Calu3 (cell line): ENCODE measurements at regions of chr12 and their contacts with region 1.

Region 1: DNA sequence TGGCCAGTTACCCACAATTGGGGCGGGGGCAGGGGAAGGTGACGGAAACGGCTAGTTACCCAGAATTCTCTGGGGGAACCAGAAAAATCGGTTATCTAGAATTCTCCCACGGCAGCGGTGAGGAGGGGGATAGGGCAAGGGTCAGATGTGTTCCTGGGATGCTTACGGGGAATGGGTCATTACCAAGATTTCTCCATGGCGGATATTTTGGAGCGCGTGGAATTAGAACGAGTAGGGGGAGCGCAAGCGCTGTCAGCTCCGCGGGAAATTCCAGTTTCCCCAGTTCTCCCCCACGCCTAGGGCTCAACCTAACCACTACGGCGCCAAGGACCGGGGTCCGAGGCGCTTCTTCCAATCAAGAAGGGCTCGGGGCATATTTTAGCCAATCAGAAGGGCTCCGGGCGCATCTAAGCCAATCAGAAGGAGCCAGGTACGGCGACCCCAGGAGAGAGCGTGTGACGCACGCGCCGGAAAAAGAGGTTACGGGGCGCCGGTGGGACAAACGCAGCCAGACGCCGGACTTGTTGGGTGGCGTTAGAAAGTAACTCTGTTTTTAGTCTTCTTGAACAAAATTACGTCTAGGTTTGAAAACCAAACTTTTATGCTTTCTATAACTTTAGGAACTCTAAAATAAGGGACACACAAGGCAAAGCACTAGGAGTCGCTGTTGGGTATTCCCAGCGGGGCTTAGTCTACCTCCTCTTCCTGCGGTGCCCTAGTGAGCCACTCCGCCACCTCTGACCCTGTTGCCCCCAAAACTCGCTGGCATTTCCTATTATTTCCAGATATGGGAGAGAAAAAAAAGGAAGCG is at the start of gene PAN2:
- DNase-seq: peak; percentile 96
- H3K4me3 Mint-ChIP-seq: peak within 1 kb of the TSS; percentile 79
- H3K27ac Mint-ChIP-seq: peak within 1 kb of the TSS; percentile 99
- H3K4me1 Mint-ChIP-seq: peaks cover 27% of the 10 kb centered on the region
- H3K27me3 Mint-ChIP-seq: no peaks in the 10 kb centered on the region
- CTCF ChIP-seq: peak; percentile 58
- total RNA-seq, gene PAN2: 53.5 and 72.5 TPM in 2 replicates

Region 2: DNA sequence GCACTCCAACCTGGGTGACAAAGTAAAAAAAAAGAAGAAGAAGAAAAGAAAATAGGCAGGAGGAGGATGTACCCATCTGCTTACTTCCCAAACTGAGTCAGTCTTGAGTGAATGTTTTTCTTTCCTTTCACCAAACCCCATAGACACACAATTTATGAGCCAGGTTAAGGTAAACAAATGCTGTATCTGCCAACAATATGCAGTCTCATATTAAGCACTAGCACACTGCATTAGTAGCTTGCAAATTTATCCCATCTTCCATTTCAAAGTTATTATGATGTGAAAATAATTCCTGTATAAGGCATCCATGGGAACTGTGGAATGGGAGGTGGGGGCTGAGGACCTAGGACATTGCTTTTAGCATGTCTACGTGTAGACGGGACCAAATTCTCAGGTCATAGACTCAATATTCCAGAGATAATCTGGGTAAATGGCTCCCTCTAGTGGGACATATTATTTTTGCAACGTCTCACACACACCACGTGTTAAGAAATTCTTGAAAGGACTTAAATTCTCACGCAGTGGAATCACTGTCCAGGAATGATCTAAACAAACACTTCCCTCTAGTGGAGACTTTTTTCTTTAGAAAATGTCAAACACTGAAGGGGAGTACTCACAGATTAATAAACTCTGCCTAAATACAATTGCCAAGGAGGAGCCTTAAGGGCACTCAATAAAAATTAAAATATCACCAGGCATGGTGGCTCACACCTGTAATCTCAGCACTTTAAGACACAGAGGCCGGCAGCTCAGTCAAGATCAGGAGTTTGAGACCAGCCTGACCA is 714.3 kb before region 1 on chr12:
- CTCF ChIA-PET with region 1: no interaction called
- intact Hi-C with region 1: no loop called
- DNase-seq: peak; percentile 82
- H3K4me3 Mint-ChIP-seq: no peak overlapping the region
- H3K27ac Mint-ChIP-seq: no peak overlapping the region
- H3K4me1 Mint-ChIP-seq: no peaks in the 10 kb centered on the region
- H3K27me3 Mint-ChIP-seq: peaks cover 18% of the 10 kb centered on the region
- CTCF ChIP-seq: peak; percentile 86

Region 3: GRCh38 chr12:55760663-55761062 is 573.2 kb before region 1 on chr12:
- CTCF ChIA-PET with region 1: no interaction called
- intact Hi-C with region 1: no loop called
- DNase-seq: no peak
- H3K4me3 Mint-ChIP-seq: no peak overlapping the region
- H3K27ac Mint-ChIP-seq: no peak overlapping the region
- H3K4me1 Mint-ChIP-seq: no peaks in the 10 kb centered on the region
- H3K27me3 Mint-ChIP-seq: no peaks in the 10 kb centered on the region
- CTCF ChIP-seq: no peak

Region 4: DNA sequence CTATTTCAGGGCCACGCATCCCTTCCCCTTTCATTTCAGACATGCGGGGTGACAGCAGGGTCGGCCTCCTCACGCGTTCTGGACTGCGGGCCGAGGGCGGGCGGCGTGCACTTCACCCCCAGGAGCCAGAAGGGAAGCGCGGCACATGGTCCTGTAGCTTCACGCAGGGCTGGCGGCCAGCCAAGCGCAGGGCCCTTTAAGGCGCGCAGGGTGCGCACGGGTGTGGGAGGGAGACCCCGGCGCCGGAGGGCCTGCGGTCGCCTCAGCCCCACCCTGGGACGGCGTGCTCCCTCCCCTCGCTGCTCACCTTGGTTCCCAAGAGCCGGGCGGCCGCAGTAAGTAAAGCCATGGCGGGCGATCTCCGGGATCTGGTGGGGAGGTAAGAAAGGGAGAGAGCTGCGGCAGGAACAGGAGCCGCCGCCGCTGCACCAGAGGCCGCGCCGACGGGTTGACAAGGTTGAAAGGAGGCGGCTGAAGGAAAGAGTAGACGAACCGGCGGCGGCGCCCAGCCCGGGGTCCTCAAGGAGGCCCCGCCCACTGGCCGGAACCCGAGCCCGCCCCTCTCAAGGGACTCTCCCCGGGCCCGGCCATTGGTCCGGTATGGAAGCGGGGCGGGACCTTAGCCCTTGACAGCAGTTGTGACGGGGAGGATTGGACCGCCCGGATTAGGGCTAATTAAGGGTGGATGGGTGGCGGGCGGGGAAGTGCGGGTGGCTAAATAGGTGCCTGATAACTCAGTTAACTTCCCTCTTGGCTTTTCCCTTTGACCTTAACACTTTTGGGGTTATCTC is 33.8 kb before region 1 on chr12 and contains the start of gene CS:
- CTCF ChIA-PET with region 1: interaction called, 3 read pairs
- intact Hi-C with region 1: loop called (anchors 1 kb)
- DNase-seq: peak; percentile 99
- H3K4me3 Mint-ChIP-seq: peak within 1 kb of the TSS; percentile 96
- H3K27ac Mint-ChIP-seq: peak within 1 kb of the TSS; percentile 92
- H3K4me1 Mint-ChIP-seq: peaks cover 29% of the 10 kb centered on the region
- H3K27me3 Mint-ChIP-seq: no peaks in the 10 kb centered on the region
- CTCF ChIP-seq: no peak
- total RNA-seq, gene CS: 212 and 254 TPM in 2 replicates

Region 5: GRCh38 chr12:56315622-56316473 is 18.0 kb before region 1 on chr12 and contains the start of gene CNPY2:
- CTCF ChIA-PET with region 1: interaction called, 15 read pairs
- intact Hi-C with region 1: loop called (anchors 1 kb)
- DNase-seq: peak; percentile 98
- H3K4me3 Mint-ChIP-seq: peak within 1 kb of the TSS; percentile 100
- H3K27ac Mint-ChIP-seq: peak within 1 kb of the TSS; percentile 99
- H3K4me1 Mint-ChIP-seq: no peaks in the 10 kb centered on the region
- H3K27me3 Mint-ChIP-seq: no peaks in the 10 kb centered on the region
- CTCF ChIP-seq: no peak
- total RNA-seq, gene CNPY2: 228 and 236 TPM in 2 replicates